ENCODE measurements at regions of chr3 and their contacts with region 1.

Region 1: GRCh38 chr3:56323986-56324420 is 144.3 kb downstream of the ERC2 start:
- DNase-seq: no peak
- ATAC-seq: peak; percentile 51
- H3K4me3 ChIP-seq: no peak overlapping the region
- H3K27ac ChIP-seq: no peak overlapping the region
- H3K4me1 ChIP-seq: no peaks in the 10 kb centered on the region
- H3K27me3 ChIP-seq: no peaks in the 10 kb centered on the region

Region 2: DNA sequence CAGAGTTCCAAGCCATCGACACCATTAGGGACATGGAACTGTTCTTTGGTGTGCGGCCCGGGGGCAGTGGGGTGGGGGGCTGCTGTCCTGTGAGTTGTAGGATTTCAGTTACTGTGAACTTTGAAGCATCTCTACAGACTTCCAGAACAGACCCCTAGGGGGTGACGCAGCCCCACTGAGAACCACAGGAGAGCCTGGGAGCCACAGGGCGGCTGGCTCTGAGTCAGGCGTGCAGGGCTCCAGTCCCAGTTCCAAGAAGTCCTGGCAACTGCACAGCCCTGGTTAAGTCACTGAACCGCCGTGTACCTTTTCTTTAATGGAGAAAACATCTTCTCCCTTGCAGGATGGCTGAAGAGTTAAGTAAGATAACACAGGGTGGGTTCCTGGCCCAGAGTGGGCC is 1372.6 kb before region 1 on chr3:
- intact Hi-C with region 1: loop called in 1 of 2 experiments (anchors 5 kb)
- DNase-seq: peak; percentile 78 to 87
- ATAC-seq: peak; percentile 87
- H3K4me3 ChIP-seq: no peak overlapping the region
- H3K27ac ChIP-seq: no peak overlapping the region
- H3K4me1 ChIP-seq: no peaks in the 10 kb centered on the region
- H3K27me3 ChIP-seq: no peaks in the 10 kb centered on the region

Region 3: DNA sequence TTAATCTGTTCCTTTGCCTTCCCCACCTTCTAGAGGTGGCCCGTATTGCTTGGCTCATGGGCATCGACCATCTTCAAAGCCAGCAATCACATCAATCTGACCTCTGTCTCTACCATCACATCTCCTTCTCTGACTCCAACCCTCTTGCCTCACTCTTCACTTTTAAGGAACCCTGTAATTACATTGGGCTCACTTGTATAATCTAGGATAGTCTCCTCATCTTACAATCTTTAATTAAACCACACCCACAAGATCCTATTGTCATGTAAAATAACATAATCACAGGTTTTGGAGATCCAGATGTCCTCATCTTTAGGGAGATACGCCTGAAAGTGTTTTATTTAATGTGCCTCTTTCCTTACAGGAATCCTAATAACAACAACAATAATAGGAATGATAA is 90.3 kb before region 1 on chr3:
- intact Hi-C with region 1: no loop called
- DNase-seq: no peak
- ATAC-seq: no peak
- H3K4me3 ChIP-seq: no peak overlapping the region
- H3K27ac ChIP-seq: no peak overlapping the region
- H3K4me1 ChIP-seq: no peaks in the 10 kb centered on the region
- H3K27me3 ChIP-seq: no peaks in the 10 kb centered on the region

Region 4: GRCh38 chr3:56423661-56424099 is 99.7 kb after region 1 on chr3:
- intact Hi-C with region 1: no loop called
- DNase-seq: no peak
- ATAC-seq: no peak
- H3K4me3 ChIP-seq: no peak overlapping the region
- H3K27ac ChIP-seq: no peak overlapping the region
- H3K4me1 ChIP-seq: no peaks in the 10 kb centered on the region
- H3K27me3 ChIP-seq: no peaks in the 10 kb centered on the region

Measured in aorta (tissue), 5 donors.